GM12878 (cell line): ENCODE measurements at regions of chr2 and their contacts with region 1.

Region 1: GRCh38 chr2:9813312-9814133 is 29.8 kb upstream of the TAF1B start:
- DNase-seq: no peak
- ATAC-seq: peak; percentile 98
- H3K4me3 ChIP-seq: no peak overlapping the region
- H3K27ac ChIP-seq: no peak overlapping the region
- H3K4me1 ChIP-seq: no peaks in the 10 kb centered on the region
- H3K27me3 ChIP-seq: no peaks in the 10 kb centered on the region; a peak in 2 of 4 replicates
- CTCF ChIP-seq: peak; percentile 95 to 96 (median 96)
- EP300 ChIP-seq: no peak
- POLR2A ChIP-seq: no peak
- RAD21 ChIP-seq: peak; percentile 85

Region 2: GRCh38 chr2:9799665-9800632 is 13.6 kb before region 1 on chr2:
- CTCF ChIA-PET with region 1: interaction called, 80 read pairs
- POLR2A ChIA-PET with region 1: no interaction called
- RAD21 ChIA-PET with region 1: interaction called, 37 read pairs
- SMC1A ChIA-PET with region 1: interaction called, 39 read pairs
- in situ Hi-C with region 1: no loop called
- intact Hi-C with region 1: no loop called
- DNase-seq: peak; percentile 47
- ATAC-seq: peak; percentile 93
- H3K4me3 ChIP-seq: no peak overlapping the region; the same call in 1 of the 2 replicates
- H3K27ac ChIP-seq: no peak overlapping the region
- H3K4me1 ChIP-seq: peaks cover 11% of the 10 kb centered on the region
- H3K27me3 ChIP-seq: no peaks in the 10 kb centered on the region; a peak in 1 of 4 replicates
- CTCF ChIP-seq: peak; percentile 97 to 100 (median 98)
- EP300 ChIP-seq: no peak
- POLR2A ChIP-seq: no peak
- RAD21 ChIP-seq: peak; percentile 84

Region 3: DNA sequence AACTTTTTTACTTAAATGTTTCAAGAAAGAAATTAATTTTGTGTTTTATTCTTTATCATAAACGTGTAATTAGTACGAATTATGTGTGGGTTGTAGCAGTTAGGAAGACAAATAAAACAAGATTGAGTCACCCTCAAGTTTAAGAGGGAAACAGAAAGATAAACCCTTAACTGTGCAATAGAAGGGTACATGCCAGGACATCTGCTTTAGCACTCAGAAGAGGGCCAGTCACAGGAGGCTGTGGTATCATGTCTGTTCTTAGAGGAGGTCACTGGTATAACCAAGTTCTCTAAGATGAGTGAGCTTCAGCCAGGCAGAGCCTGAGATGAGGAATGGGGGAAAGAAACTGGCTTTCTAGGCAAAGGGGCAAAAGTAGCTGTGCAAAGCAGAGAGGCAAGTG is 95.6 kb after region 1 on chr2:
- CTCF ChIA-PET with region 1: interaction called, 67 read pairs
- POLR2A ChIA-PET with region 1: no interaction called
- RAD21 ChIA-PET with region 1: interaction called, 27 read pairs
- SMC1A ChIA-PET with region 1: interaction called, 21 read pairs
- in situ Hi-C with region 1: no loop called
- intact Hi-C with region 1: loop called (anchors 1 kb)
- DNase-seq: no peak
- ATAC-seq: no peak
- H3K4me3 ChIP-seq: no peak overlapping the region
- H3K27ac ChIP-seq: no peak overlapping the region
- H3K4me1 ChIP-seq: peaks cover 2% of the 10 kb centered on the region
- H3K27me3 ChIP-seq: no peaks in the 10 kb centered on the region
- CTCF ChIP-seq: no peak
- EP300 ChIP-seq: no peak
- POLR2A ChIP-seq: no peak
- RAD21 ChIP-seq: no peak

Region 4: DNA sequence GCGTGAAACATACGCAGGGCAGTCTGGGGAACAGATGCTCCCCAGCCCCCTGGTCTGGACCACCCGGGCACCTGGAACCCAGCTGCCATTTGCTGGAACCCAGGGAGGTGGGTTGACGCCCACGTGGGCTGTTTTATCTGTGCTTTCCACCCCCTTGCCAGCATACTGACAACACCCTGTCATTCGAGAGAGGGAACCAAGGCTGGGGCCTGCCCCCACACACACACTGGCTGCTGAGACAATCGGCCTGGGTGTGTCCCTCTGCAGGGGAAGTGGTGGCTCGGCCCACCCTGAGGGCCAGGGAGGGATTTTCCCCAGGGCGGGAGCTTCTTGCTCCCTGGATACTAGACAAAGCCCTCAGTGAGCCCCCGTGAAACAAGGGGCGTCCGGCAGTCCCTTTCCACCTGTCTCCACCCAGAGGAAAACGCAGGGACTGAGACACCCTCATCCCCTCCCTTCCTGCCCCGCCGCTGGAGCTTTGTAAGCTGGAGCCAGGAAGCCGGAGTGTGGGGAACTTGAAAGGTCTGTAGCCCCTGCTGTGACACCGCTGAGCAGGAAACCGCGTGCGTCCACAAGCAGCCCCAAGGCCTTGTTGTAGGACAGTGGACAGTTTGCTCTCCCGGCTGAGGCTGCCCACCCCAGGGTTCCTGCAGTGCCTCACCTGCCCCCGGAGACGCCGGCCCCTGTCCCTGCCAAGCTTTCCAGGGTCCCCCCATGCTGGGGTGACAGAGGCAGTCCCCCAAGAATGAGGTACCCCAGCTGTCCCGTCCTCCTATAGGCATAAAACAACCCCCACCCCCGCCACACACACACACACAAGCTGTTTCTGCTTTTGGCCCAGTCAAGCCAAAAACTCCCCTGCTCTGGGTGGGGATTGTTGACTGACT is 215.7 kb after region 1 on chr2:
- CTCF ChIA-PET with region 1: interaction called, 34 read pairs
- POLR2A ChIA-PET with region 1: no interaction called
- RAD21 ChIA-PET with region 1: interaction called, 8 read pairs
- SMC1A ChIA-PET with region 1: no interaction called
- in situ Hi-C with region 1: no loop called
- intact Hi-C with region 1: no loop called
- DNase-seq: no peak
- ATAC-seq: peak; percentile 89
- H3K4me3 ChIP-seq: no peak overlapping the region
- H3K27ac ChIP-seq: no peak overlapping the region
- H3K4me1 ChIP-seq: peaks cover 11% of the 10 kb centered on the region
- H3K27me3 ChIP-seq: no peaks in the 10 kb centered on the region
- CTCF ChIP-seq: 0 out of 6 replicates have a peak, but pooled peaks of 1 of the 3 experiments have one; percentile 3
- EP300 ChIP-seq: no peak
- POLR2A ChIP-seq: no peak
- RAD21 ChIP-seq: no peak